B cell (primary cell): ENCODE measurements at regions of chr22 and their contacts with region 1.

Region 1: DNA sequence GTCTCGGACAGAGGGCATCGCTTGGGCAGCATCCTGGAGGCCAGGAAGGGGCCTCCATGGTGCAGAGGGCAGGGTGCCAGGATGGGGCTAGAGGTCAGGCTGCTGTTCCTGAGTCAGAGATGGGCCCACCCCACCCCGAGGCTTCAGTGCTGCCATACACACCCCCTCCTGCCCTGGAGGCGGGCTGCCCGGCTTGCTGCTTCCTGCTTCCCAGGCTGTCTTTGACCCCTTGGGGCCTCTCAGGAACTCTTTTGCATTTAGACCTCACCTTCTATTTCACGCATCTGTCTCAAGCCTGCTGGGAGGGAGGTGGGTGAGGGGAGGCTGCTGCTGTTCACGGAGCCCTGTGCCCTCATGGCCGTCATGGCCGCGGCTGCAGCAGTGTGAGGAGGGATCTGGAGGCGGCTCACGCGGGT is 6.6 kb upstream of the GRAMD4 start:
- DNase-seq: no peak
- ATAC-seq: peak; percentile 34
- H3K4me3 ChIP-seq: peak overlapping the region; percentile 33 to 64 (median 46)
- H3K4me3 Mint-ChIP-seq: peak overlapping the region; percentile 95
- H3K27ac ChIP-seq: peak overlapping the region; percentile 42 to 67
- H3K27ac Mint-ChIP-seq: peak overlapping the region; percentile 93
- H3K4me1 ChIP-seq: peaks cover 28 to 30% of the 10 kb centered on the region in 2 donors
- H3K4me1 Mint-ChIP-seq: peaks cover 38% of the 10 kb centered on the region
- H3K27me3 ChIP-seq: no peaks in the 10 kb centered on the region
- H3K27me3 Mint-ChIP-seq: no peaks in the 10 kb centered on the region
- CTCF ChIP-seq: no peak

Region 2: DNA sequence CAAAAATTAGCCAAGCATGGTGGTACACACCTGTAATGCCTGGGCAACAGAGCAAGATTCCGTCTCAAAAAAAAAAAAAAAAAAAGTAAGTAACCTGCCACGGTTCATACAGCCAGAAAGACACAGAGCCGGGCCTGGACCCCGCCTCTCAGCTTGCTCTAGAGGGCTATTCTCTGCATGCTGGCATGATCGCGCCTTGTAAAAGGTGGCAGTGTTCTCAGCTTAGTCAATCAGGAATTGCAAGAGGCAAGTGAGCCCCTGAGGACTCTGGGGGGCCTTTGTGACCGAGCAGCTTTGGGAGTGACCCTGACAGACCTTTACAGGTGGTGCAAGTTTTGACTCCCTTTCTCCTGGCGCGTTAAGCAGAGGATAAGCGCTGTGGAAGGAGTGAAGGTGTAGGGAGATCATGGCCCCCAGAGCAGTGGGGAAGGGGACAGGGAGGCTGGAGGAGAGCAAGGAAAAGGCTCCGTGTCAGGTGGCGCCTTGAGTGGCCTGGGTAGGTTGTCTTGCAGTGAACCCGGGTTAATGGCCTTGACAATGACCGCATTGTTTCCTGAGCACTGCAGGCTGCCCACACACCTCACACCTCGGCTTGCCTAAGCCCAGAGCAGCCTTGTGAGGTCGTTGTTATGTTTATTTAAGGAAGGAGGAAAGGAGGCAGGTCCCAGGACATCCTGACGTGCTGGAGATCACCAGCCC is 412.4 kb before region 1 on chr22:
- CTCF ChIA-PET with region 1: no interaction called
- POLR2A ChIA-PET with region 1: no interaction called
- intact Hi-C with region 1: no loop called
- DNase-seq: no peak
- ATAC-seq: no peak
- H3K4me3 ChIP-seq: no peak overlapping the region
- H3K4me3 Mint-ChIP-seq: no peak overlapping the region
- H3K27ac ChIP-seq: no peak overlapping the region
- H3K27ac Mint-ChIP-seq: no peak overlapping the region
- H3K4me1 ChIP-seq: no peaks in the 10 kb centered on the region
- H3K4me1 Mint-ChIP-seq: no peaks in the 10 kb centered on the region
- H3K27me3 ChIP-seq: no peaks in the 10 kb centered on the region
- H3K27me3 Mint-ChIP-seq: no peaks in the 10 kb centered on the region
- CTCF ChIP-seq: no peak

Region 3: GRCh38 chr22:46576556-46577367 is 36.9 kb before region 1 on chr22:
- CTCF ChIA-PET with region 1: interaction called, 3 read pairs
- POLR2A ChIA-PET with region 1: interaction called, 3 read pairs
- intact Hi-C with region 1: loop called (anchors 5 kb)
- DNase-seq: peak; percentile 79
- ATAC-seq: peak; percentile 76
- H3K4me3 ChIP-seq: peak overlapping the region in 4 of 5 experiments; percentile 52 to 64 (median 61)
- H3K4me3 Mint-ChIP-seq: peak overlapping the region; percentile 84
- H3K27ac ChIP-seq: no peak overlapping the region
- H3K27ac Mint-ChIP-seq: peak overlapping the region; percentile 84
- H3K4me1 ChIP-seq: peaks cover 45 to 54% of the 10 kb centered on the region in 2 donors
- H3K4me1 Mint-ChIP-seq: peaks cover 54% of the 10 kb centered on the region
- H3K27me3 ChIP-seq: no peaks in the 10 kb centered on the region
- H3K27me3 Mint-ChIP-seq: no peaks in the 10 kb centered on the region
- CTCF ChIP-seq: no peak

Region 4: GRCh38 chr22:46598737-46599424 is 14.7 kb before region 1 on chr22:
- CTCF ChIA-PET with region 1: no interaction called
- POLR2A ChIA-PET with region 1: no interaction called
- intact Hi-C with region 1: no loop called
- DNase-seq: no peak
- ATAC-seq: no peak
- H3K4me3 ChIP-seq: no peak overlapping the region
- H3K4me3 Mint-ChIP-seq: no peak overlapping the region
- H3K27ac ChIP-seq: no peak overlapping the region
- H3K27ac Mint-ChIP-seq: no peak overlapping the region
- H3K4me1 ChIP-seq: peaks cover 8 to 39% of the 10 kb centered on the region in 2 donors
- H3K4me1 Mint-ChIP-seq: peaks cover 38% of the 10 kb centered on the region
- H3K27me3 ChIP-seq: no peaks in the 10 kb centered on the region
- H3K27me3 Mint-ChIP-seq: no peaks in the 10 kb centered on the region
- CTCF ChIP-seq: no peak

Region 5: GRCh38 chr22:46674367-46674781 is 60.8 kb after region 1 on chr22:
- CTCF ChIA-PET with region 1: no interaction called
- POLR2A ChIA-PET with region 1: no interaction called
- intact Hi-C with region 1: loop called (anchors 5 kb)
- DNase-seq: peak; percentile 89
- ATAC-seq: peak; percentile 78
- H3K4me3 ChIP-seq: peak overlapping the region; percentile 2 to 40 (median 27)
- H3K4me3 Mint-ChIP-seq: peak overlapping the region; percentile 93
- H3K27ac ChIP-seq: peak overlapping the region in 1 of 2 donors; percentile 65
- H3K27ac Mint-ChIP-seq: peak overlapping the region; percentile 92
- H3K4me1 ChIP-seq: peaks cover 32 to 39% of the 10 kb centered on the region in 2 donors
- H3K4me1 Mint-ChIP-seq: peaks cover 34% of the 10 kb centered on the region
- H3K27me3 ChIP-seq: peaks cover 0 to 21% (median 0%) of the 10 kb centered on the region in 4 experiments
- H3K27me3 Mint-ChIP-seq: no peaks in the 10 kb centered on the region
- CTCF ChIP-seq: no peak

Region 6: DNA sequence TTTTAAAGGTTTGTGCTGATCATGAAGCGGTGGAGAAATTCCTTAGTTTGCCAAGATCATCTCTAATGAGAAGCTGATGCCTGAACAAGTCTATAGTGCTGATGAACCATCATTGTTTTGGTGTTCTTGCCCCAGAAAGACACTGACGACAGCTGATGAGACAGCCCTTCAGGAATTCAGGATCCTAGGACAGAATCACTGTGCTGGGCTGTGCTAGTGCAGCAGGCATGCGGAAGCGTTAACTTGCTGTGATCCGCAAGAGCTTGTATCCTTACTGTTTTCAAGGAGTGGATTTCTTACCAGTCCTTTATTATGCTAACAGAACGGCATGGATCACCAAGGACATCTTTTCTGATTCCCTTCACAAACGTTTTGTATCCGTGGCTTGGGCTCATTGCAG is 253.0 kb after region 1 on chr22:
- CTCF ChIA-PET with region 1: no interaction called
- POLR2A ChIA-PET with region 1: no interaction called
- intact Hi-C with region 1: no loop called
- DNase-seq: no peak
- ATAC-seq: no peak
- H3K4me3 ChIP-seq: no peak overlapping the region
- H3K4me3 Mint-ChIP-seq: no peak overlapping the region
- H3K27ac ChIP-seq: no peak overlapping the region
- H3K27ac Mint-ChIP-seq: no peak overlapping the region
- H3K4me1 ChIP-seq: peaks cover 18 to 24% of the 10 kb centered on the region in 2 donors
- H3K4me1 Mint-ChIP-seq: peaks cover 41% of the 10 kb centered on the region
- H3K27me3 ChIP-seq: no peaks in the 10 kb centered on the region
- H3K27me3 Mint-ChIP-seq: no peaks in the 10 kb centered on the region
- CTCF ChIP-seq: no peak

Region 7: GRCh38 chr22:47071078-47071806 is 457.6 kb after region 1 on chr22:
- CTCF ChIA-PET with region 1: no interaction called
- POLR2A ChIA-PET with region 1: no interaction called
- intact Hi-C with region 1: no loop called
- DNase-seq: no peak
- ATAC-seq: no peak
- H3K4me3 ChIP-seq: no peak overlapping the region
- H3K4me3 Mint-ChIP-seq: no peak overlapping the region
- H3K27ac ChIP-seq: no peak overlapping the region
- H3K27ac Mint-ChIP-seq: no peak overlapping the region
- H3K4me1 ChIP-seq: no peaks in the 10 kb centered on the region
- H3K4me1 Mint-ChIP-seq: peaks cover 2% of the 10 kb centered on the region
- H3K27me3 ChIP-seq: no peaks in the 10 kb centered on the region
- H3K27me3 Mint-ChIP-seq: no peaks in the 10 kb centered on the region
- CTCF ChIP-seq: no peak